ENCODE measurements at regions of chrX and their contacts with region 1.

Region 1: DNA sequence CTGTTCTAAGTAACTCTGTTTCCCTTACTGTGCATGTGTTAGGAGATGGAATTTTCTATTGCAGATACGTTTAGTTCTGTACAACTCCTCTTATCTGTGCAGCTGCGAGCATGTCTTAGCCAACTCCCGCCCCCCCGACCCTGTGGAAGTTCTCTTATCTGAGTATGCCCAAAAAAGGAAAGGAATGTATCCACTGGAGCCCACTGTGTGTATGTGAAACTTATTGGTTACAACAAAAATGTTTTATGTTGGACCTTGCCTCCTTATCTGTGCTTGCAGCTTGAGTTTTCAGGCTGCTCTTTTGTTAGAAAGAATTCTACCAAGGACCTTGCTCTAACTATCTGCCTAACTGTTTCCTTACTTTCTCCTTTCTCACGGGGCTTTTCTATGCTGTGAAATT is 24.2 kb upstream of the DCAF8L2 start:
- DNase-seq: peak; percentile 94
- H3K4me3 ChIP-seq: no peak overlapping the region
- H3K27ac ChIP-seq: peak overlapping the region; percentile 96
- H3K4me1 ChIP-seq: peaks cover 15% of the 10 kb centered on the region
- H3K27me3 ChIP-seq: no peaks in the 10 kb centered on the region
- CTCF ChIP-seq: no peak
- POLR2A ChIP-seq: no peak

Region 2: GRCh38 chrX:27309406-27309805 is 256.6 kb before region 1 on chrX:
- CTCF ChIA-PET with region 1: no interaction called
- POLR2A ChIA-PET with region 1: interaction called, 4 read pairs
- dilution Hi-C with region 1: no loop called
- intact Hi-C with region 1: loop called (anchors 2 kb)
- DNase-seq: peak; percentile 89
- H3K4me3 ChIP-seq: no peak overlapping the region
- H3K27ac ChIP-seq: peak overlapping the region; percentile 77
- H3K4me1 ChIP-seq: peaks cover 21% of the 10 kb centered on the region
- H3K27me3 ChIP-seq: no peaks in the 10 kb centered on the region
- CTCF ChIP-seq: no peak
- POLR2A ChIP-seq: no peak

Region 3: DNA sequence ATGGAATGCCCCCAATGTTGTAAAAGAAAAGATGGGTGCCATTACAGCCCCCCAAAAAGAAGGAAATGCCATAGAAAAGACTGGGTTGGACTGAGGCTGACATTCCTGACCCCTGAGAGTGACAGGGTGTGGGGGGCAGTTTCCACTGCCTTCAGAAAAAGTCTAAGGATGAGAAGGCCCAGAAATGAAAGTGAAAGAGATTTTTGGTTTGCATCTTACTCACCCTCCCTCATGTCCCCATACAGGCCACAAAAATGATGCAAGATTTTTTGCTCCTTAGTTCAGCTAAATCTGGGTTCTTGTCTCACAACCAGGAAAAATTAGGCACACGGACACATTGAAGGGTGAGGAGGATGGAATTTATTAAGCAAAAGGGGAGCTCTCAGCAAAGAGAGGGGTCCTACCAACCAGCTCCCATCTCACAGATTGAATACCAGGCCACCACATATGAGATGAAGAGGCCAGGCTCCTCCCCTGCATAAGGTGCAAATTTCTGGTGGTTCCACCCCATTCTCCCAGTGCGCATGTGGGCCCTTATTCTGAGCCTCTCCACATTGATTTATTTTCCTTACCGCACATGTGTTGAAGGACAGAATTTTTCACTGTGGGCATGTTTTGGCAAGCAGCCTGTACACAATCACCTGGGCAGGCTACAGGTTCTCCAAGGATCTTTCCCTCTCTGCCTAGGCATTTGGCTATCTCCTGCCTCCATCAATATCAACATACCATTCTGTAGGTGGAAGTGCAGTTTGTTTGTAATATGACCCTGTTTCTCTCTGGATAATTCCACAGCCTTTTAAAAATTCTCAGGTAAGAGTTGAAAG is 121.7 kb before region 1 on chrX:
- CTCF ChIA-PET with region 1: no interaction called
- POLR2A ChIA-PET with region 1: interaction called, 15 read pairs
- dilution Hi-C with region 1: no loop called
- intact Hi-C with region 1: no loop called
- DNase-seq: no peak
- H3K4me3 ChIP-seq: no peak overlapping the region
- H3K27ac ChIP-seq: no peak overlapping the region
- H3K4me1 ChIP-seq: no peaks in the 10 kb centered on the region
- H3K27me3 ChIP-seq: no peaks in the 10 kb centered on the region
- CTCF ChIP-seq: no peak
- POLR2A ChIP-seq: no peak

Region 4: DNA sequence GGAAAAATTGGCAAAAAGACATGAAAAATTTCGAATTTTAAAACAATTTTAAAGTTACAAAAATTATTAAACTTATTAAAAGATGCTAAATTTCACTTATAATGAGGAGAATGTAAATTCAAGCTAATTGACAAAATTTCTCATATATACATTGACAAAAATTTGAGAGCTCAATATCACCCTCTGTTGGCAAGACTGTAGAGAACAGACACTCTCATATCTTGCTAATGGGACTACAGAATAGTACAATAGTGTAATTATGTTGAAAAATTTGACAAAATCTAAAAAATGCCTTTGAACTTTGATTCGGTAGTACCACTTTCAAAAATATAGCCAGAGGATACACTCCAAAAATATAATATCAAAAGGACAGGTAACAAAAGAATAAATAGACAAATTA is 54.0 kb after region 1 on chrX:
- CTCF ChIA-PET with region 1: interaction called, 10 read pairs
- POLR2A ChIA-PET with region 1: interaction called, 17 read pairs
- dilution Hi-C with region 1: no loop called
- intact Hi-C with region 1: loop called (anchors 1 kb)
- DNase-seq: peak; percentile 53
- H3K4me3 ChIP-seq: no peak overlapping the region
- H3K27ac ChIP-seq: peak overlapping the region; percentile 65
- H3K4me1 ChIP-seq: peaks cover 15% of the 10 kb centered on the region
- H3K27me3 ChIP-seq: no peaks in the 10 kb centered on the region
- CTCF ChIP-seq: peak; percentile 13 to 18
- POLR2A ChIP-seq: no peak